ENCODE measurements at regions of chr18 and their contacts with region 1.

Region 1: GRCh38 chr18:49486953-49487710 is at the start of gene C18orf32:
- DNase-seq: peak; percentile 97
- H3K4me3 ChIP-seq: peak within 1 kb of the TSS; percentile 55 to 95 (median 70)
- H3K27ac ChIP-seq: peak within 1 kb of the TSS; percentile 95 to 99 (median 97)
- H3K4me1 ChIP-seq: peaks cover 16 to 51% (median 35%) of the 10 kb centered on the region in 4 donors
- H3K27me3 ChIP-seq: no peaks in the 10 kb centered on the region
- CTCF ChIP-seq: no peak
- EP300 ChIP-seq: no peak
- POLR2A ChIP-seq: peak; percentile 97
- total RNA-seq, gene C18orf32: 10.0 to 50.2 (median 28.1) TPM

Region 2: DNA sequence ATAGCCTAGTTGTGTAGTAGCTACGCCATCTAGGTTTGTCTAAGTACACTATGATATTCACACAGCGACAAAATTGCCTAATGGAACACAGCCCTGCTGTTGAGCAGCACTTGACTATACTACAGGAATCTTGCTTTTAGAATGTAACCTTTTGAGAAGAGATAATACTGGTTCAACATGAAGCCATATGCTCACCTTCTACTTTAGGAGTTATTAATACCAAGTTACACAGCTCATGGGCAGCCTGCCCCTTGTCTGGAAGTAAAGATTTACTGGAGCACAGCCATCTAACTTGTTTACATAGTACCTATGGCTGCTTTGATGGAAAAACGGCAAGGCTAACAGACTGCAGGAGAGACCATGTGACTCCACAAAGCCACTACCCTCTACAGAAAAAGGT is 201.5 kb before region 1 on chr18:
- in situ Hi-C with region 1: no loop called
- intact Hi-C with region 1: no loop called
- DNase-seq: no peak
- H3K4me3 ChIP-seq: no peak overlapping the region
- H3K27ac ChIP-seq: no peak overlapping the region
- H3K4me1 ChIP-seq: no peaks in the 10 kb centered on the region
- H3K27me3 ChIP-seq: no peaks in the 10 kb centered on the region
- CTCF ChIP-seq: no peak
- EP300 ChIP-seq: no peak
- POLR2A ChIP-seq: no peak

Region 3: GRCh38 chr18:50287441-50288347 is 800.6 kb after region 1 on chr18 and contains the start of gene CXXC1:
- in situ Hi-C with region 1: loop called in 1 of 4 experiments (anchors 25 kb)
- intact Hi-C with region 1: no loop called
- DNase-seq: peak; percentile 98
- H3K4me3 ChIP-seq: peak within 1 kb of the TSS; percentile 53 to 87 (median 69)
- H3K27ac ChIP-seq: peak within 1 kb of the TSS; percentile 77 to 91 (median 87)
- H3K4me1 ChIP-seq: peaks cover 0 to 9% (median 4%) of the 10 kb centered on the region in 4 donors
- H3K27me3 ChIP-seq: no peaks in the 10 kb centered on the region
- CTCF ChIP-seq: peak; percentile 48 to 87 (median 51)
- EP300 ChIP-seq: no peak
- POLR2A ChIP-seq: peak; percentile 76
- total RNA-seq, gene CXXC1: 68.9 to 234 (median 117) TPM